Sigmoid colon (tissue), 7 donors: ENCODE measurements at regions of chr6 and their contacts with region 1.

Region 1: DNA sequence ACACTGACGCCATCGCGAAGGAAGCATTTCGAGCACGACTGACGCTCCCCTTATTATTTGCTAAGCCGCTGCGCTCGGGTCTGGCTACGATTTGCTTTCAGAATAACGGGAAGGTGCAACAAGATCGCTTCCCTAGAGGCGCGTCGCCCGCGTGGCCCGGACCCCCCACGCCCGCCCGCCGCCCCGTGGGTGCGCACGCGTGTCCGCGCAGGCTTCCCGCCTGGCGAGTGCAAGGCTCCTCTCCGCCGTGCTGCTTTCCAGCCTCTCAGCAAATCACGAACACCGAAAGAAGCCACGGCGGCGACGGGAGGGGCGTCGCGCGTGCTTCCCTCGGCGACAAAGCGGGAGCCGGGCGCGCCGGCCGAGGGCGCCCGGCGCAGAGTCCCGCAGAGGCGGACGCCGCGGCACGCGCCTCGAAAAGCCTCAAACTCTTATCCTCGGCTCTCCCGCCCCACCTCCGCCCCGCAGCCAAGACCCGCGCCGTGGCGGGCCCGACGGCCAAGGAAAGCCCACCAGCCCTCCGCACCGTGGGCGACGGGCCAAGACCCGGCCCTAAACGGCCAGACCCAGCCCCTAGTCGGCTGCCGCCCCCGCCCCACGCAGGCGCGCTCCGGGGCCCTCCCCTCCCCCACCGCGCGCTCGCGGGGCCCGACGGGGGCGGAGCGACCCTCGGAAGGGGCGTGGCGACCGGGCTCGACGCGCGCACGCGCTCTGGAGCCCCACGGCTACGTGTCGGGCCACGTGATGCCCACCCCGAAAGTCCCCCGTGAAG is 987 bp upstream of the QKI start:
- DNase-seq: peak; percentile 94
- H3K4me3 ChIP-seq: peak overlapping the region; percentile 53 to 100 (median 88)
- H3K27ac ChIP-seq: peak overlapping the region; percentile 92 to 100 (median 98)
- H3K4me1 ChIP-seq: peaks cover 0 to 25% (median 17%) of the 10 kb centered on the region in 4 donors
- H3K27me3 ChIP-seq: no peaks in the 10 kb centered on the region
- CTCF ChIP-seq: no peak
- EP300 ChIP-seq: no peak
- POLR2A ChIP-seq: peak in 1 of 2 donors; percentile 39

Region 2: DNA sequence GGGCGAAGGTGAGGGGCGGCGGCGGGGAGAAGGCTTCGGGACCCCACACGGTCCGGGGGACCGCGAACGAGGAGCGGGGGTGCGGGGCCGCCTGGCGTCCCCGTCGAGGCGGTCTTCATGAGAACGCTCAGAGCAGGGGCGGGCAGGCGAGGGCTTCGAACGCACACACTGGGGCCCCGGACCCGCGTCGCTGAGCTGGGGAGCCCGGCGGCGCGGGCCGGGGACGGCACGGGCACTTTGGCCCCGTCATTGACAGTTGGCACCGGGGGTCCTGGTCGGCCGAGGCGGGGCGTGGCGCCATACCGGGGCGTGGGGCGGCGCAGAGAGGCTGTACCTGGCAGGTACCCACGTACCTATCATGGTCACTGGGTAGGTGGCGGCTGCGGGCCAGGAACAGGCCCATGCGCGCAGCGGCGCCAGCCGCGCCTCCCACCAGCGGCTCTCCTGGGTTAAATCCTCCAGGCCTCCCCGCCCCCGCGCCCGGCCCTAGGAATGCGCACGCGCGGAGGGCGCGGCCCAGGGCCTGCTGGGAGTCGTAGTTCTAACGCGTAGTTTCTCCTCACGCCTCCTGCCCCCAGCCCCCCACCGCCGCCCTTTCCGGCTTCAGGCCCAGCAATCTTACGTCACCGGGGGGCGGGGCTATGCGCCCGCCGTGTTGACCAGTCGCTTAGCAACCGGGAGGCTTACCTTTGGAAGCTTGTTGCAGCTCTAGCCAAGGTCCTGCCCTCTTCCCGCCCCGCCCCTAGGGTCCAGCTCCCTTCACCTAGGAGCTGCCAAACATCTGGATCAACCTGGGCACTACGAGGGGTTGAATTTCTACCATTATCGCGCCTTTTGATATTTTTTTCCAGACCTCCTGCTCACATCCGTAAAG is 686.0 kb before region 1 on chr6 and contains the starts of genes PACRG and PRKN:
- intact Hi-C with region 1: loop called (anchors 5 kb)
- DNase-seq: peak; percentile 99
- H3K4me3 ChIP-seq: peak within 1 kb of the TSS; percentile 71 to 99 (median 98)
- H3K27ac ChIP-seq: peak within 1 kb of the TSS; percentile 79 to 93 (median 87)
- H3K4me1 ChIP-seq: peaks cover 0 to 20% (median 12%) of the 10 kb centered on the region in 4 donors
- H3K27me3 ChIP-seq: no peaks in the 10 kb centered on the region
- CTCF ChIP-seq: no peak
- EP300 ChIP-seq: peak in 3 of 4 donors; percentile 1 to 67 (median 57)
- POLR2A ChIP-seq: peak; percentile 70 to 83
- total RNA-seq, gene PACRG: 0.36 to 6.9 (median 1.7) TPM
- total RNA-seq, gene PRKN: 9.7 to 173 (median 12.7) TPM

Region 3: DNA sequence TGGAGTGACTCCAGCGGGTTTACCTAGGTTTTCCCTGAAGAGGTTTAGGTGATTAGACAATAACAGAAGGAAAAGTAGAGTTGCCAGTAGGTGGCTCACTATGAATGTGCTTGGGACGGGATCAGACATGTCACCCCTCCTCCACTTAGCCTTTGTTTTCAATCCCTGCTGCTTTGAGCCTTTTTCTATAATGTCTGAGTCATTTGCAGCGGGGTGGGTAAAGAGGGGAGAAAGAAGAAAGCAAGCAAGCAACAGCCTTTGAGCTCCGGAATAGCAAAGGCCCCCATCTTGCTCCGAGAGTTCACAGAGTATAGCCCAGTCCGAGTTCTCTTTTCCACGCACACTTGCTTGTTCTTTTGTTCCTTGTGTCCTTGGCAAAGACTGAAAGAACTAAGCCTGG is 556.6 kb before region 1 on chr6:
- intact Hi-C with region 1: loop called (anchors 10 kb)
- DNase-seq: peak; percentile 62
- H3K4me3 ChIP-seq: peak overlapping the region in 3 of 4 donors; percentile 24 to 35 (median 34)
- H3K27ac ChIP-seq: peak overlapping the region in 3 of 4 donors; percentile 0 to 14 (median 3)
- H3K4me1 ChIP-seq: no peaks in the 10 kb centered on the region
- H3K27me3 ChIP-seq: no peaks in the 10 kb centered on the region
- CTCF ChIP-seq: peak in 3 of 4 experiments; percentile 39 to 42 (median 40)
- EP300 ChIP-seq: no peak
- POLR2A ChIP-seq: no peak

Region 4: DNA sequence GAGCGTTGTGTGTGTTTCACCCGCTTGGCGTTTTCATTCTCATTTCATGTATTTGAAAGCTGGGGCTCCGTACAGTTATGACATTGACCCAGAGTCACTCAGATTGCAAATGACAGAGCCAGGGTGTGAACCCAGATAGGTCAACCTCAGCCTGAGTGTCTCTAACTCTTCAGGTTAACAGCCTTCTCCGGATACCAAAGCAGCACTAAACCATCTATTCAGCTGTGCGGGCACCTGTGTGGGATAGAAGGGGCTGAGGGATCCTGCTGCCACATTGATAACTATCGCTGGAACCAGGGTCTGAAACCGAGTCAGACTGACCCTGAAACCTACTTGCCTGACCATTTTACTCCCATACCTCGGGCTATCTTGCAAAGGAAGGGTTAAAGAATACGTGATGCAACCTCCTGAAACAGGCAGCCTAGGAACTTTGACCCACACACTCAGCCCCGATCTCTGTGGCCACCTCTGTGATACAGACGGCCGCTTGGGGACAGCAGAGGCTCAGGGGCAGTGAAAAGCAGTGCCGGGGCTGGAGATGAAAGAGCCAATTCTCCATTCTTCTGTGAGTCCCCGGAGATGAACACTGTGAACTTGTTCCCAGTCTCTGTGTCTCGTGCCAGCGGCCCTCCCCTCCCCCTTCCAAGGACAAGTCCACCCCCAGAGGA is 232.5 kb before region 1 on chr6:
- intact Hi-C with region 1: loop called (anchors 2 kb)
- DNase-seq: peak; percentile 84
- H3K4me3 ChIP-seq: no peak overlapping the region
- H3K27ac ChIP-seq: no peak overlapping the region
- H3K4me1 ChIP-seq: peaks cover 0 to 21% (median 14%) of the 10 kb centered on the region in 4 donors
- H3K27me3 ChIP-seq: no peaks in the 10 kb centered on the region
- CTCF ChIP-seq: peak; percentile 25 to 52 (median 42)
- EP300 ChIP-seq: no peak
- POLR2A ChIP-seq: no peak

Region 5: DNA sequence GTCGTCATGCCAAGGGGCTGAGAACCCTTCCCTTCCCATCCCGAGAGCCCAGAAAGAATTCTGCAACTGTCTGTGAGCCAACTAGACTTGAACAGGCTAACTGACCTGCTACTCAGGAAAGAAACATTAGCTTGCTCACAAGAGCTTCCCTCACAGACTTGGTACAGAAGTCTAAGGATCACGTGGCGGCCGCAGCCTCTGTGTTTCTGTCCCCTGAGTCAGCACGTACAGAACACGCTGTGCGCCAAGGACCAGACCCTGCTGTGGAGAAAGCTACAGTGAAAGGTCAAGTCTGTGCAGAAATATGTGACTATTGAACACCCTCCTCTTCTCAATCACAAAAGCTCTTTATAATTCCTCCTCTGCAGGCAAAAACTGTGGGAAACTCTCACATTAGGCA is 150.3 kb before region 1 on chr6:
- intact Hi-C with region 1: no loop called
- DNase-seq: peak; percentile 80
- H3K4me3 ChIP-seq: no peak overlapping the region
- H3K27ac ChIP-seq: peak overlapping the region in 1 of 4 donors; percentile 10
- H3K4me1 ChIP-seq: peaks cover 0 to 16% (median 7%) of the 10 kb centered on the region in 4 donors
- H3K27me3 ChIP-seq: no peaks in the 10 kb centered on the region
- CTCF ChIP-seq: no peak
- EP300 ChIP-seq: no peak
- POLR2A ChIP-seq: no peak

Region 6: GRCh38 chr6:163490826-163491577 is 77.5 kb after region 1 on chr6:
- intact Hi-C with region 1: loop called (anchors 5 kb)
- DNase-seq: peak; percentile 85
- H3K4me3 ChIP-seq: no peak overlapping the region
- H3K27ac ChIP-seq: peak overlapping the region; percentile 26 to 76 (median 36)
- H3K4me1 ChIP-seq: peaks cover 0 to 77% (median 52%) of the 10 kb centered on the region in 4 donors
- H3K27me3 ChIP-seq: no peaks in the 10 kb centered on the region
- CTCF ChIP-seq: no peak
- EP300 ChIP-seq: no peak
- POLR2A ChIP-seq: no peak

Region 7: GRCh38 chr6:163956571-163957407 is 543.3 kb after region 1 on chr6:
- intact Hi-C with region 1: loop called (anchors 5 kb)
- DNase-seq: peak; percentile 83
- H3K4me3 ChIP-seq: no peak overlapping the region
- H3K27ac ChIP-seq: no peak overlapping the region
- H3K4me1 ChIP-seq: peaks cover 0 to 13% (median 0%) of the 10 kb centered on the region in 4 donors
- H3K27me3 ChIP-seq: no peaks in the 10 kb centered on the region
- CTCF ChIP-seq: peak; percentile 32 to 81 (median 68)
- EP300 ChIP-seq: no peak
- POLR2A ChIP-seq: no peak